HCT116 (cell line): ENCODE measurements at regions of chr13 and their contacts with region 1.

Region 1: GRCh38 chr13:44692173-44692713 is 116.1 kb upstream of the TSC22D1 start:
- DNase-seq: peak; percentile 70
- ATAC-seq: peak; percentile 89
- H3K4me3 ChIP-seq: no peak overlapping the region
- H3K27ac ChIP-seq: no peak overlapping the region
- H3K4me1 ChIP-seq: no peaks in the 10 kb centered on the region
- H3K27me3 ChIP-seq: no peaks in the 10 kb centered on the region
- CTCF ChIP-seq: peak in 2 of 3 experiments; percentile 20 to 35; a peak in 2 of 6 replicates
- POLR2A ChIP-seq: peak; percentile 100
- RAD21 ChIP-seq: no peak

Region 2: DNA sequence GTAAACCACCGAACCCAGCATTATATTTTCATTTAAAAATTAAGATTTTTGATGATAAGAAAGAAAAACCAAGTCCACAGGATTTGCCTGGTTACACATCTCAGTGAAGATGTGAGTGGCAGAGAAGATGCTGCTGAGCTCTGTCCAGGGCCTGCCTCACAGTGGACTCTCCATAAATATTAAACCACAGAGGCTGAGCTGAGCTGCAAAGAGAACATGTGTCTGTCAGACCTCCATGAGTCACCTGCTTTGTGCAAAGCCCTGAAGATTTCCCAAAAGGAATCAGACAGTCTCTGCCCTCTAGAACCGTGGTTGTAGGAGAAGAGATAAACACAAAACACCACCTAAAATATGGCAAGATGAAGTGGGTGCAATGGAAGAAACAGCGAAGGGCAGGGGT is 11.1 kb after region 1 on chr13:
- CTCF ChIA-PET with region 1: interaction called, 3 read pairs
- POLR2A ChIA-PET with region 1: interaction called, 15 read pairs
- RAD21 ChIA-PET with region 1: no interaction called
- intact Hi-C with region 1: no loop called
- DNase-seq: no peak
- ATAC-seq: no peak
- H3K4me3 ChIP-seq: no peak overlapping the region
- H3K27ac ChIP-seq: no peak overlapping the region
- H3K4me1 ChIP-seq: peaks cover 0 to 15% of the 10 kb centered on the region in 2 experiments; a peak in 2 of 4 replicates
- H3K27me3 ChIP-seq: no peaks in the 10 kb centered on the region
- CTCF ChIP-seq: no peak
- POLR2A ChIP-seq: no peak
- RAD21 ChIP-seq: no peak

Region 3: GRCh38 chr13:44713788-44714469 is 21.7 kb after region 1 on chr13:
- CTCF ChIA-PET with region 1: interaction called, 4 read pairs
- POLR2A ChIA-PET with region 1: interaction called, 15 read pairs
- RAD21 ChIA-PET with region 1: no interaction called
- intact Hi-C with region 1: no loop called
- DNase-seq: peak; percentile 79
- ATAC-seq: peak; percentile 82
- H3K4me3 ChIP-seq: peak overlapping the region; percentile 19 to 22; a peak in 3 of 4 replicates
- H3K27ac ChIP-seq: peak overlapping the region; percentile 59
- H3K4me1 ChIP-seq: peaks cover 34 to 63% of the 10 kb centered on the region in 2 experiments
- H3K27me3 ChIP-seq: no peaks in the 10 kb centered on the region
- CTCF ChIP-seq: no peak
- POLR2A ChIP-seq: no peak
- RAD21 ChIP-seq: peak; percentile 25; the same call in 1 of the 2 replicates

Region 4: GRCh38 chr13:44778766-44779484 is 86.7 kb after region 1 on chr13:
- CTCF ChIA-PET with region 1: no interaction called
- POLR2A ChIA-PET with region 1: no interaction called
- RAD21 ChIA-PET with region 1: no interaction called
- intact Hi-C with region 1: no loop called
- DNase-seq: no peak
- ATAC-seq: no peak
- H3K4me3 ChIP-seq: no peak overlapping the region
- H3K27ac ChIP-seq: no peak overlapping the region
- H3K4me1 ChIP-seq: no peaks in the 10 kb centered on the region
- H3K27me3 ChIP-seq: no peaks in the 10 kb centered on the region
- CTCF ChIP-seq: no peak
- POLR2A ChIP-seq: no peak
- RAD21 ChIP-seq: no peak

Region 5: GRCh38 chr13:44815623-44816022 is 123.4 kb after region 1 on chr13:
- CTCF ChIA-PET with region 1: interaction called, 3 read pairs
- POLR2A ChIA-PET with region 1: interaction called, 43 read pairs
- RAD21 ChIA-PET with region 1: no interaction called
- intact Hi-C with region 1: no loop called
- DNase-seq: peak; percentile 67
- ATAC-seq: peak; percentile 70
- H3K4me3 ChIP-seq: 0 out of 4 replicates have a peak overlapping the region, but pooled peaks of 1 of the 2 experiments have one; percentile 4
- H3K27ac ChIP-seq: no peak overlapping the region
- H3K4me1 ChIP-seq: peaks cover 37 to 52% of the 10 kb centered on the region in 2 experiments
- H3K27me3 ChIP-seq: no peaks in the 10 kb centered on the region
- CTCF ChIP-seq: no peak
- POLR2A ChIP-seq: no peak
- RAD21 ChIP-seq: peak; percentile 26; the same call in 1 of the 2 replicates